Motor neuron (in vitro differentiated cells): ENCODE measurements at regions of chr9 and their contacts with region 1.

Region 1: DNA sequence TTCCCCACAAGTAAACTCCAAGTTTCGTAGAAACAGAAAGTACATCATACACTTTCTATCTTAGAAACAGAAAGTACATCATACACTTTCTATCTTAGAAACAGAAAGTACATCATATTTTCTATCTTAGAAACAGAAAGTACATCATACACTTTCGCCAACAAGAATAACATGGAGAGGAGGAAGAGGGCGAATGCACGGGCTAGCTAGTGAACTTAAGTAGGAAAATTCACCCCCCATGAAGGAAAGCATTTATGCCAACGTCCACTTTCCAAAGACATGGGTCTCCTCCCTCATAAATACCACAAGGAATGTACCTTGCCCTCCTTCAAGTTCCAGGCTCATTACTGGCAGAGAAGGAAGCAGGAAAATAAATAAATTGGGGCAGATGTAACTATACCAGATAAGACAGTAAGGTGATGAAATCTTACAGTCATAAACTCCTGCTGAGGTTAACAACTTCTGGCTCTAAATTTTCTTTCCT is 64.7 kb downstream of the FRMD3 start:
- ATAC-seq: no peak
- H3K4me3 ChIP-seq: no peak overlapping the region
- H3K27ac ChIP-seq: no peak overlapping the region
- H3K4me1 ChIP-seq: no peaks in the 10 kb centered on the region

Region 2: GRCh38 chr9:83355024-83355444 is 118.5 kb before region 1 on chr9:
- in situ Hi-C with region 1: loop called in 1 of 9 experiments (anchors 25 kb)
- ATAC-seq: no peak
- H3K4me3 ChIP-seq: no peak overlapping the region
- H3K27ac ChIP-seq: no peak overlapping the region
- H3K4me1 ChIP-seq: no peaks in the 10 kb centered on the region

Region 3: GRCh38 chr9:83544002-83544698 is 70.6 kb after region 1 on chr9:
- in situ Hi-C with region 1: no loop called
- ATAC-seq: peak in 6 of 8 experiments; percentile 27 to 99 (median 98)
- H3K4me3 ChIP-seq: no peak overlapping the region
- H3K27ac ChIP-seq: no peak overlapping the region
- H3K4me1 ChIP-seq: no peaks in the 10 kb centered on the region

Region 4: GRCh38 chr9:83701769-83702168 is 228.2 kb after region 1 on chr9:
- in situ Hi-C with region 1: no loop called
- ATAC-seq: peak in 3 of 8 experiments; percentile 39 to 77 (median 72)
- H3K4me3 ChIP-seq: no peak overlapping the region
- H3K27ac ChIP-seq: no peak overlapping the region
- H3K4me1 ChIP-seq: peaks cover 0 to 13% of the 10 kb centered on the region in 2 donors